ENCODE measurements at regions of chr14 and their contacts with region 1.

Region 1: DNA sequence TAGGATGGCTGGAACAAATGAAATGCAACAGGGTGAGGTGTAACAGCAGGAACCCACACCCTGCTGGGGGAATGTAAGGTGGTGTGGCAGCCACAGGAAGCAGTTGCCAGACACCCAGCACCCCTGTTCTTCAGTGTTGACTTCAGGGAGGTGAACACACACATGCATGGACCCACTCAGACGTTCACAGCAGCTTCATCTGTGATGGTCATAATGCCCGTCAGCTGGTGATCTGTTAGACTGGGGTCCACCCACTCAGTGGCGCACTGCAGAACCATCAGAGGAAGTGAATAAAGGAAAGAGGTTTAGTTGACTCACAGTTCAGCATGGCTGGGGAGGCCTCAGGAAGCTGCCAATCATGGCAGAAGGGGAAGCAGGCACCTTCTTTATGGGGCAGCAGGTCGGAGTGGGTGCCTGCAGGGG is 22.7 kb upstream of the TEX22 start:
- DNase-seq: no peak
- H3K4me3 ChIP-seq: no peak overlapping the region
- H3K27ac ChIP-seq: no peak overlapping the region
- H3K4me1 ChIP-seq: no peaks in the 10 kb centered on the region
- H3K27me3 ChIP-seq: no peaks in the 10 kb centered on the region; a peak in 1 of 7 replicates
- CTCF ChIP-seq: no peak
- EP300 ChIP-seq: no peak
- POLR2A ChIP-seq: no peak
- RAD21 ChIP-seq: no peak

Region 2: GRCh38 chr14:105363847-105364708 is 11.6 kb before region 1 on chr14:
- CTCF ChIA-PET with region 1: interaction called, 10 read pairs
- POLR2A ChIA-PET with region 1: no interaction called
- DNase-seq: no peak
- H3K4me3 ChIP-seq: no peak overlapping the region
- H3K27ac ChIP-seq: no peak overlapping the region
- H3K4me1 ChIP-seq: no peaks in the 10 kb centered on the region
- H3K27me3 ChIP-seq: no peaks in the 10 kb centered on the region; a peak in 1 of 7 replicates
- CTCF ChIP-seq: no peak
- EP300 ChIP-seq: no peak
- POLR2A ChIP-seq: no peak
- RAD21 ChIP-seq: no peak

Region 3: GRCh38 chr14:105430535-105430934 is 54.9 kb after region 1 on chr14:
- CTCF ChIA-PET with region 1: interaction called, 10 read pairs
- POLR2A ChIA-PET with region 1: no interaction called
- DNase-seq: no peak
- H3K4me3 ChIP-seq: no peak overlapping the region
- H3K27ac ChIP-seq: no peak overlapping the region
- H3K4me1 ChIP-seq: peaks cover 0 to 5% (median 4%) of the 10 kb centered on the region in 4 experiments; a peak in 5 of 7 replicates
- H3K27me3 ChIP-seq: no peaks in the 10 kb centered on the region
- CTCF ChIP-seq: no peak
- EP300 ChIP-seq: no peak
- POLR2A ChIP-seq: no peak
- RAD21 ChIP-seq: no peak

Region 4: GRCh38 chr14:105700622-105701288 is 325.1 kb after region 1 on chr14:
- CTCF ChIA-PET with region 1: no interaction called
- POLR2A ChIA-PET with region 1: no interaction called
- DNase-seq: no peak
- H3K4me3 ChIP-seq: no peak overlapping the region
- H3K27ac ChIP-seq: no peak overlapping the region
- H3K4me1 ChIP-seq: no peaks in the 10 kb centered on the region
- H3K27me3 ChIP-seq: no peaks in the 10 kb centered on the region
- CTCF ChIP-seq: no peak
- EP300 ChIP-seq: no peak
- POLR2A ChIP-seq: no peak
- RAD21 ChIP-seq: no peak